AG04449 (cell line): ENCODE measurements at regions of chr2 and their contacts with region 1.

Region 1: DNA sequence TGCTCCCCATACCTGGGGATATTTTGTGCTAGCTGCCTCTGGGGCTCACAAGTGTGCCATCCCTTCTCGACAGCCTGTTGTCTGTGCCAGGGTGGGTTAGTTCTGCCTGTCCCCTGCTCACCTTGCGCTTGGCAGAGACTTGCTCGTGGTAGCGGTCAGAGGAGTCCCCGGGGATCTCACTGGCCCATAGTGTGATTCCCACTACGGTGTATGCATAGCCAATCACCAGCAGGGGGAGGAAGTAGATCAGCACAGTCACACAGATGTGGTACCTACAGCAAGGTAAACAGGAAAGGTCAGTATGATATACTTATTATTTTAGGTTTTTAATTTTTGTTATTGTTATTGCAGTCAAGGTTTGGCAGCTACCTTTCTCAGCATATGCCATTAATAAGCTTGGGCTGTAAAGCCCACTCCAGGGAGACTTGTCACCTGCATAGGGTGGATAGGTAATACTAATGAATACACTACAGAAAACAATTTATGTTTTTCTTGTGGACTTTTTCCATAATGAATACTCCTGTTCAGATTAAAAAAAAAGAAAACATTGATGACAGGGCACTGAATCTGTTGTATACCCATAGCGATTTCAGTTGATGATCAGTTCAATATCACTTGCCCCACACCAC is 95.2 kb downstream of the POLE4 start:
- DNase-seq: no peak
- H3K4me3 ChIP-seq: no peak overlapping the region
- CTCF ChIP-seq: peak; percentile 65

Region 2: GRCh38 chr2:75041731-75042600 is 11.6 kb before region 1 on chr2:
- CTCF ChIA-PET with region 1: interaction called, 10 read pairs
- POLR2A ChIA-PET with region 1: no interaction called
- DNase-seq: no peak
- H3K4me3 ChIP-seq: no peak overlapping the region
- CTCF ChIP-seq: no peak